Activated CD4-positive, alpha-beta memory T cell treated with anti-CD3 and anti-CD28 coated beads, Interleukin-2, amount 10 ng/mL, durations not matched to agents 7 days and 5 days (primary cell): ENCODE measurements at regions of chr20 and their contacts with region 1.

Region 1: GRCh38 chr20:32779500-32780211 is 17.5 kb downstream of the DNMT3B start:
- DNase-seq: no peak
- H3K4me3 Mint-ChIP-seq: no peak overlapping the region
- H3K27ac Mint-ChIP-seq: no peak overlapping the region
- H3K4me1 Mint-ChIP-seq: peaks cover 3% of the 10 kb centered on the region
- H3K27me3 Mint-ChIP-seq: no peaks in the 10 kb centered on the region

Region 2: DNA sequence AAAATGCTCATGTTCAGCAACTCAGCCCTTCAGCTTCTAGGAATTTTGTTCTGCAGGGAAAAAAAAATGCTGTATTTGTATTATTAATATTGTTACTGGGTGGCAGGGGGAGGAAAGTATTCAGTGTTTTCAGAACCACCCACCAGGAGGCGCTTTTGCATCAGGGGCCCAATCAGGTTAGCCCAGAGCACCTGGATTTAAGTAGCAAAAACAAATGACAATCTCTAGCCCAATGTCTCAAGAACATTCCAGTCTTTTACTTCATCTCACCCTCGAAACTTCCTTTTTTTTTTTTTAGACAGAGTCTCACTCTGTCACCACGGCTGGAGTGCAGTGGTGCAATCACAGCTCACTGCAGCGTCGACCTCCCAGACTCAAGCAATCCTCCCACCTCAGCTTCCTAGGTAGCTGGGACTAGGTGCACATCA is 105.3 kb before region 1 on chr20:
- CTCF ChIA-PET with region 1: interaction called, 241 read pairs
- POLR2A ChIA-PET with region 1: interaction called, 13 read pairs
- DNase-seq: peak; percentile 77
- H3K4me3 Mint-ChIP-seq: no peak overlapping the region
- H3K27ac Mint-ChIP-seq: no peak overlapping the region
- H3K4me1 Mint-ChIP-seq: peaks cover 23% of the 10 kb centered on the region
- H3K27me3 Mint-ChIP-seq: no peaks in the 10 kb centered on the region

Region 3: DNA sequence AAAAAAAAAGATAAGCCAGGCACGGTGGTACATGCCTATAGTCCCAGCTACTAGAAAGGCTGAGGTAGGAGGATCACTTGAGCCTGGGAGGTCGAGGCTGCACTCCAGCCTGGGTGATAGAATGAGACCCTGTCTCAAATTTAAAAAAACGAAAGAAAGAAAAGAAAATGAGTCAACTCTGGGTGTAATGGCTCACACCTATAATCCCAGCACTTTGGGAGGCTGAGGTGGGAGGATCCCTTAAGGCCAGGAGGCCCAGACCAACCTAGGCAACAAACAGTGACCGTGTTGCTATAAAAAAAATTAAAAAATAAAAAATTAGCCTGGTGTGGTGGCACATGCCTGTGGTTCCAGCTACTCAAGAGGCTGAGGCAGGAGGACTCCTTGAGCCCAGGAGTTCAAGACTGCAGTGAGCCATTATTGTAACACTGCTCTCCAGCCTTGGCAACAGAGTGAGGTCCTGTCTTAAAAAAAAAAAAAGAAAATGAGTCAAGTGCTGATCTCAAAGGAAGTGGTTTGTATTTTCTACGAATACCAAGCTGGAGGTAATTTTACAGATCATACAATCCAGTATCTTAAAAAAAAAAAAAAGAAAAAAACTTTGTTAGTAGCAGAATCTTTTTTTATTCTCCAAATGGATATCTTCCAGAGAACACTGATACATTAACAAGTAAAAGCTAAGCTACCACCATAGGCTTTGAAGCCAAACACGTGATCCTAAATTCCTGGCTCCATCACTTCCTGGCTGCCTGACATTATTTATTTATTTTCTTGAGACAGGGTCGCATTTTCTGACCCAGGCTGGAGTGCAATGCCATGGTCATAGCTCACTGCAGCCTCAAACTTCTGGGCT is 42.1 kb before region 1 on chr20:
- CTCF ChIA-PET with region 1: interaction called, 16 read pairs
- POLR2A ChIA-PET with region 1: interaction called, 11 read pairs
- DNase-seq: peak; percentile 54
- H3K4me3 Mint-ChIP-seq: peak overlapping the region; percentile 24
- H3K27ac Mint-ChIP-seq: peak overlapping the region; percentile 87
- H3K4me1 Mint-ChIP-seq: peaks cover 53% of the 10 kb centered on the region
- H3K27me3 Mint-ChIP-seq: no peaks in the 10 kb centered on the region

Region 4: GRCh38 chr20:32756156-32756555 is 23.5 kb before region 1 on chr20:
- CTCF ChIA-PET with region 1: interaction called, 12 read pairs
- POLR2A ChIA-PET with region 1: no interaction called
- DNase-seq: no peak
- H3K4me3 Mint-ChIP-seq: no peak overlapping the region
- H3K27ac Mint-ChIP-seq: no peak overlapping the region
- H3K4me1 Mint-ChIP-seq: peaks cover 7% of the 10 kb centered on the region
- H3K27me3 Mint-ChIP-seq: peaks cover 1% of the 10 kb centered on the region

Region 5: DNA sequence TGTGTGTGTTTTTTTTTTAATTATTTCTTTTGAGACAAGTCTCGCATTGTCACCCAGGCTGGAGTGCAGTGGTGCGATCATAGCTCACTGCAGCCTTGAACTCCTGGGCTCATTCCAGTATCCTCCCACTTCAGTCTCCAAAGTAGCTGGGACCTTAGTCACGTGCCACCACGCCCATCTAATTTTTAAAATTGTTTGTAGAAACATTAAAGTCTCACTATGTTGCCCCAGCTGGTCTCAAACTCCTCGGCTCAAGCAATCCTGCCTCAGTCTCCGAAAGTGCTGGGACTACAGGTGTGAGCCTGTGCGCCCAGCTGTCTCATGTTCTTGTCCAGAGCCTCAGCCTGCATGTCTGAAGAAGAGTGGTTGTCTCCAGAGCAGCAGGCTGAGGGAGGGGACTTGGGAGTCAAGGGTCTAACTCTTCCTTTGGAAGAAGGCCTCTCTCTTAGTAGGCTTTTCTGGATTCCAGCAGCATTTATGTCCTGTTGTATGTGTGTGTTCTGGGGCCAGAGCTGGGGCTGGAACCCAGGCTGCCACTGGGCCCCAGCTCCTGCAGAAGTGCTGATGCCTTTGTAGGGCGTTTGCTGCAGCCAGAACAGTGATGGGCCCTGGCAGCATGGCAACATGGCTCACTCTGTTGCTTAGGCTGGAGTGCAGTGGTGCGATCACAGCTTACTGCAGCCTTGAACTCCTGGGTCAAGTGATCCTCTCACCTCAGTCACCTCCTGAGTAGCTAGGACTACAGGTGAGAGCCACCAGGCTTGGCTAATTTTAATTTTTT is 12.0 kb before region 1 on chr20:
- CTCF ChIA-PET with region 1: interaction called, 21 read pairs
- POLR2A ChIA-PET with region 1: interaction called, 5 read pairs
- DNase-seq: no peak
- H3K4me3 Mint-ChIP-seq: no peak overlapping the region
- H3K27ac Mint-ChIP-seq: no peak overlapping the region
- H3K4me1 Mint-ChIP-seq: peaks cover 11% of the 10 kb centered on the region
- H3K27me3 Mint-ChIP-seq: peaks cover 12% of the 10 kb centered on the region

Region 6: DNA sequence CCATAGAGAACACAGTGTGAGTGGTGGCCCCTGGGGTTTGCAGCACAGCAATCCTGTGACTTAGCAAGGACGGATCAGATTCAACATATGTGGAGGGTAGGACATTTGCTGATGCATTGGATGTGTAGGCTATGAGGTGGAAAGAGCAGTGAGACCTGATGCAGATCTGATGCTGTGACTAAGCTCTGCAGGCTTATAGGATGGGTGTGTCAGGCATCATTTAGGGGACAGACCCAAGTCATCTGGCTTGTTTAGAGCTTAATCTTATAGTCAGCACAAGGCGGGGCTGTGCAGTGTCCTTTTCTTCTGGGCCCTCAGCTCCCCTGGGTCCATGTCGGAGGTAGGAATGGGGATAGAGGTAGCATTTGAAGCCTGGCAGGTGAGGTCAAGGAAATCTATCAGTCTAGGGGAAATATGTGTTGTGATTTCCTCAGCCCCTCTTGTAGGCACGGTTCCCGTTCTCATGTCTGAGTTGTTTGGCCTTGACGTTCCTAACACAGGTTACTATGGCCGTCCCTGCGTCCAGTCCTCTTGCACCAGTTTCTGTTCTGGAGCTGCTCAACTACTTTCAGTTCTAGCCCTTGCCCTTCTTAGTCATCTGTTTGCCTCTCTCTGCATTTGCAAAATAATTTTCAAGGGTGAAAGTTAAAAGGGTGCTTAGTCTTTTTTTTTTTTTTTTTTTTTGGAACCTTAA is 24.5 kb after region 1 on chr20:
- CTCF ChIA-PET with region 1: interaction called, 12 read pairs
- POLR2A ChIA-PET with region 1: no interaction called
- DNase-seq: no peak
- H3K4me3 Mint-ChIP-seq: no peak overlapping the region
- H3K27ac Mint-ChIP-seq: no peak overlapping the region
- H3K4me1 Mint-ChIP-seq: no peaks in the 10 kb centered on the region
- H3K27me3 Mint-ChIP-seq: no peaks in the 10 kb centered on the region